ENCODE measurements at regions of chr17 and their contacts with region 1.

Region 1: GRCh38 chr17:59331129-59331928 is at the start of gene YPEL2:
- DNase-seq: peak; percentile 100
- H3K4me3 ChIP-seq: peak within 1 kb of the TSS; percentile 78 to 91
- H3K27ac ChIP-seq: peak within 1 kb of the TSS; percentile 58 to 88; a peak in 3 of 4 replicates
- H3K4me1 ChIP-seq: peaks cover 20 to 54% of the 10 kb centered on the region in 2 experiments
- H3K27me3 ChIP-seq: no peaks in the 10 kb centered on the region
- CTCF ChIP-seq: no peak
- EP300 ChIP-seq: peak in 1 of 2 experiments; percentile 79; a peak in 2 of 4 replicates
- RAD21 ChIP-seq: no peak
- polyA plus RNA-seq, gene YPEL2: 3.2 and 5.5 TPM in 2 replicates

Region 2: GRCh38 chr17:59172436-59173004 is 158.8 kb before region 1 on chr17:
- CTCF ChIA-PET with region 1: no interaction called
- POLR2A ChIA-PET with region 1: no interaction called
- DNase-seq: no peak
- H3K4me3 ChIP-seq: no peak overlapping the region
- H3K27ac ChIP-seq: no peak overlapping the region
- H3K4me1 ChIP-seq: peaks cover 0 to 3% of the 10 kb centered on the region in 2 experiments; a peak in 1 of 4 replicates
- H3K27me3 ChIP-seq: no peaks in the 10 kb centered on the region
- CTCF ChIP-seq: no peak
- EP300 ChIP-seq: no peak
- RAD21 ChIP-seq: no peak

Region 3: GRCh38 chr17:59238906-59239305 is 92.4 kb before region 1 on chr17:
- CTCF ChIA-PET with region 1: no interaction called
- POLR2A ChIA-PET with region 1: no interaction called
- DNase-seq: no peak
- H3K4me3 ChIP-seq: no peak overlapping the region
- H3K27ac ChIP-seq: no peak overlapping the region
- H3K4me1 ChIP-seq: no peaks in the 10 kb centered on the region
- H3K27me3 ChIP-seq: no peaks in the 10 kb centered on the region
- CTCF ChIP-seq: no peak
- EP300 ChIP-seq: no peak
- RAD21 ChIP-seq: no peak

Region 4: GRCh38 chr17:59266751-59267150 is 64.6 kb before region 1 on chr17:
- CTCF ChIA-PET with region 1: no interaction called
- POLR2A ChIA-PET with region 1: no interaction called
- DNase-seq: no peak
- H3K4me3 ChIP-seq: no peak overlapping the region
- H3K27ac ChIP-seq: no peak overlapping the region
- H3K4me1 ChIP-seq: no peaks in the 10 kb centered on the region
- H3K27me3 ChIP-seq: no peaks in the 10 kb centered on the region
- CTCF ChIP-seq: no peak
- EP300 ChIP-seq: no peak
- RAD21 ChIP-seq: no peak

Region 5: DNA sequence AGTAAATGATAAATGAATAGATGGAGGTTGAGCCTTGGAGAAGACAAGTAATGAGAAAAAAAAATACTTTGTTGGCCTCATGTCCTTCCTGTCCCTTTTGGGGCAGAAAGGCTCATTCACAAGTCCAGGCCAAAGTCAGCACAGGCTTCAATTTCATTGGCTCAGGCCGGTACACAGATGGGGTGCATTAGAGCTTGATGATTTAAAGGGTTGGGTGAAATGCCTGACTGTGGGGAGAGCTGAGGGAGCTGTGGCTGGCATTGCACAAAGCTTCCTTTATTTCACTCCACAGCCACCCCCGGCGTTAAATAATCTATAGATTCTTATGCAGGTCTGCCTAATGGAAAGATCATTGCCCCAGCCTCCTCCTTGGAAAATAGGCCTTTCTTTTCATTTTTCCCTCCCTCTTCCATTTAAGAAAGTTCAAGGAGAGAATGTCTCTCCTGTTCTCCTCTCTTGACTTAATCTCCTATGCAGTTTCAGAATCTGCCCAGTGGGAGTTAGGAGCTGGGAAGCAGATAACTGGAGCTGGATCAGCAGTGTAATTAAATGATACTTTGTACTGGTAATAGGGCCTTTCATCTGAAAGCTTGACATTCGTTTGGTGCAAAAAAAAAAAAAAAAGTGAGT is 24.5 kb after region 1 on chr17:
- CTCF ChIA-PET with region 1: interaction called, 15 read pairs
- POLR2A ChIA-PET with region 1: no interaction called
- DNase-seq: no peak
- H3K4me3 ChIP-seq: no peak overlapping the region
- H3K27ac ChIP-seq: no peak overlapping the region; a peak in 1 of 4 replicates
- H3K4me1 ChIP-seq: peaks cover 16 to 26% of the 10 kb centered on the region in 2 experiments
- H3K27me3 ChIP-seq: no peaks in the 10 kb centered on the region
- CTCF ChIP-seq: no peak
- EP300 ChIP-seq: no peak
- RAD21 ChIP-seq: no peak

Region 6: GRCh38 chr17:59378458-59379074 is 47.2 kb after region 1 on chr17:
- CTCF ChIA-PET with region 1: interaction called, 10 read pairs
- POLR2A ChIA-PET with region 1: interaction called, 3 read pairs
- DNase-seq: no peak
- H3K4me3 ChIP-seq: no peak overlapping the region
- H3K27ac ChIP-seq: peak overlapping the region in 1 of 2 experiments; percentile 88; a peak in 2 of 4 replicates
- H3K4me1 ChIP-seq: peaks cover 15 to 22% of the 10 kb centered on the region in 2 experiments; a peak in 3 of 4 replicates
- H3K27me3 ChIP-seq: no peaks in the 10 kb centered on the region
- CTCF ChIP-seq: no peak
- EP300 ChIP-seq: peak in 1 of 2 experiments; percentile 38; a peak in 1 of 4 replicates
- RAD21 ChIP-seq: no peak

Region 7: GRCh38 chr17:59415397-59415796 is 84.1 kb after region 1 on chr17:
- CTCF ChIA-PET with region 1: interaction called, 12 read pairs
- POLR2A ChIA-PET with region 1: no interaction called
- DNase-seq: no peak
- H3K4me3 ChIP-seq: no peak overlapping the region
- H3K27ac ChIP-seq: no peak overlapping the region
- H3K4me1 ChIP-seq: peaks cover 0 to 3% of the 10 kb centered on the region in 2 experiments; a peak in 1 of 4 replicates
- H3K27me3 ChIP-seq: no peaks in the 10 kb centered on the region
- CTCF ChIP-seq: no peak
- EP300 ChIP-seq: no peak
- RAD21 ChIP-seq: no peak

Region 8: GRCh38 chr17:59521204-59522126 is 190.1 kb after region 1 on chr17:
- CTCF ChIA-PET with region 1: interaction called, 10 read pairs
- POLR2A ChIA-PET with region 1: no interaction called
- DNase-seq: peak; percentile 92
- H3K4me3 ChIP-seq: 0 out of 4 replicates have a peak overlapping the region, but pooled peaks of 1 of the 2 experiments have one; percentile 7
- H3K27ac ChIP-seq: peak overlapping the region in 1 of 2 experiments; percentile 70; a peak in 2 of 4 replicates
- H3K4me1 ChIP-seq: peaks cover 0 to 3% of the 10 kb centered on the region in 2 experiments; a peak in 2 of 4 replicates
- H3K27me3 ChIP-seq: no peaks in the 10 kb centered on the region
- CTCF ChIP-seq: peak; percentile 98
- EP300 ChIP-seq: peak in 1 of 2 experiments; percentile 49; a peak in 1 of 4 replicates
- RAD21 ChIP-seq: peak; percentile 98

Measured in SK-N-SH (cell line).